ENCODE measurements at regions of chr13 and their contacts with region 1.

Region 1: DNA sequence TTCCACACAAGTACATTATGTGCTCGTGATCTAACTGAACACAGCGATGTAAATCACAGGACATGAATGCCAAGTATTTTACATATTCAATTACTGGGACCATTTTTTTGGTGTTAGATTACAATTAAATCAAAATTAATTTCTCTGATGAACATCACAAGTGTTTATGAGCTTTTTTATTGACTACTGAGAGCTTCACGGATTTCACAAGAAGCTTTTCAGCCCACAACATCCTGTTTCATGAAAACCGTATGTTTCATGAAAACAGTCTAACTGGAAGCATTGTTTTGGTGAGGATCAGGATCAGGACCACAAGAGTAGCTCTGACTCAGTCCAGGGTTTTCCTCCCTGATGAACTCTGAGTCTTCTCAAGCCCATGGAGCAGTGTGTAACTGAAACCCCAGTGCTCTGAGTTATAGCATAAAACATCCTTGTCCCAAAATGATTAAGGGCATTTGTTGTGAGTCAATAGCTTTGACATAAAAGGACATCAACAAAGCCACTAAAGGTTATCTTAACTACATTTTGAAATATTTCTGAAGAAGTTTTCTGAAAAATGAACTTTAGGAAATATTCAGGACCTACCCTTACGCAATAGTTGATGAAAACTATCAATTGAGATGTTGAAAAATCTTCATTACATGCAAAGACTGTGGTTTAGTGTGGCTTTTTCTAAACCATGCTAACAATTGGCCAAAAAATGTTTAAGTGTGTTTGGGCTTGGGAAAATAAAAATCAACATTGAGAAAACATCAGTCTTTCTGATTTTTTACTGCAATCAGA is 49.3 kb downstream of the UFM1 start:
- DNase-seq: no peak
- H3K4me3 ChIP-seq: no peak overlapping the region
- H3K4me3 Mint-ChIP-seq: no peak overlapping the region
- H3K27ac Mint-ChIP-seq: no peak overlapping the region
- H3K4me1 ChIP-seq: peaks cover 10% of the 10 kb centered on the region
- H3K4me1 Mint-ChIP-seq: peaks cover 30% of the 10 kb centered on the region
- H3K27me3 ChIP-seq: no peaks in the 10 kb centered on the region
- H3K27me3 Mint-ChIP-seq: no peaks in the 10 kb centered on the region
- CTCF ChIP-seq: no peak

Region 2: GRCh38 chr13:38341149-38341692 is 57.7 kb before region 1 on chr13:
- CTCF ChIA-PET with region 1: no interaction called
- POLR2A ChIA-PET with region 1: no interaction called
- intact Hi-C with region 1: no loop called
- DNase-seq: no peak
- H3K4me3 ChIP-seq: no peak overlapping the region
- H3K4me3 Mint-ChIP-seq: no peak overlapping the region
- H3K27ac Mint-ChIP-seq: no peak overlapping the region
- H3K4me1 ChIP-seq: no peaks in the 10 kb centered on the region
- H3K4me1 Mint-ChIP-seq: peaks cover 6% of the 10 kb centered on the region
- H3K27me3 ChIP-seq: no peaks in the 10 kb centered on the region
- H3K27me3 Mint-ChIP-seq: no peaks in the 10 kb centered on the region
- CTCF ChIP-seq: no peak

Region 3: GRCh38 chr13:38366954-38367645 is 31.8 kb before region 1 on chr13:
- CTCF ChIA-PET with region 1: no interaction called
- POLR2A ChIA-PET with region 1: no interaction called
- intact Hi-C with region 1: loop called (anchors 1 kb)
- DNase-seq: no peak
- H3K4me3 ChIP-seq: no peak overlapping the region
- H3K4me3 Mint-ChIP-seq: no peak overlapping the region
- H3K27ac Mint-ChIP-seq: no peak overlapping the region
- H3K4me1 ChIP-seq: peaks cover 33% of the 10 kb centered on the region
- H3K4me1 Mint-ChIP-seq: peaks cover 7% of the 10 kb centered on the region
- H3K27me3 ChIP-seq: no peaks in the 10 kb centered on the region
- H3K27me3 Mint-ChIP-seq: no peaks in the 10 kb centered on the region
- CTCF ChIP-seq: no peak

Region 4: GRCh38 chr13:38381890-38382289 is 17.0 kb before region 1 on chr13:
- CTCF ChIA-PET with region 1: no interaction called
- POLR2A ChIA-PET with region 1: no interaction called
- intact Hi-C with region 1: loop called (anchors 1 kb)
- DNase-seq: no peak
- H3K4me3 ChIP-seq: no peak overlapping the region
- H3K4me3 Mint-ChIP-seq: no peak overlapping the region
- H3K27ac Mint-ChIP-seq: no peak overlapping the region
- H3K4me1 ChIP-seq: peaks cover 33% of the 10 kb centered on the region
- H3K4me1 Mint-ChIP-seq: no peaks in the 10 kb centered on the region
- H3K27me3 ChIP-seq: no peaks in the 10 kb centered on the region
- H3K27me3 Mint-ChIP-seq: no peaks in the 10 kb centered on the region
- CTCF ChIP-seq: no peak

Region 5: DNA sequence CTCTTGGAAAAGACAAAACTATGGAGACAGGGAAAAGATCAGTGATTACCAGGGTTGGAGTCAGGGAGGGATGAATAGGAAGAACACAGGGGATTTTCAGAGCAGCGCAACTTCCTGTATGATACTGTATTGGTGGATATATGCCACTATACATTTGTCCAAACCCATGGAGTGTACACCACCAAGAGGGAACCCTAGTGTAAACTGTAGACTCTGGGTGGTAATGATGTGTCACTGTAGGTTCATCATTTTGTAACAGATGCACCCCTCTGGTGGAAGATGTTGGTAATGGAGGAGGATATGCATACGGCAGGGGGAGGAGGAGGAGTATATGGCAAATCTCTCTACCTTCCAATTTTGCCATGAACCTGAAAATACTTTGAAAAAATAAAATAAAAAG is 18.8 kb after region 1 on chr13:
- CTCF ChIA-PET with region 1: no interaction called
- POLR2A ChIA-PET with region 1: no interaction called
- intact Hi-C with region 1: loop called (anchors 1 kb)
- DNase-seq: peak; percentile 55 to 68
- H3K4me3 ChIP-seq: no peak overlapping the region
- H3K4me3 Mint-ChIP-seq: no peak overlapping the region
- H3K27ac Mint-ChIP-seq: no peak overlapping the region
- H3K4me1 ChIP-seq: no peaks in the 10 kb centered on the region
- H3K4me1 Mint-ChIP-seq: no peaks in the 10 kb centered on the region
- H3K27me3 ChIP-seq: no peaks in the 10 kb centered on the region
- H3K27me3 Mint-ChIP-seq: no peaks in the 10 kb centered on the region
- CTCF ChIP-seq: peak; percentile 60 to 69

Region 6: DNA sequence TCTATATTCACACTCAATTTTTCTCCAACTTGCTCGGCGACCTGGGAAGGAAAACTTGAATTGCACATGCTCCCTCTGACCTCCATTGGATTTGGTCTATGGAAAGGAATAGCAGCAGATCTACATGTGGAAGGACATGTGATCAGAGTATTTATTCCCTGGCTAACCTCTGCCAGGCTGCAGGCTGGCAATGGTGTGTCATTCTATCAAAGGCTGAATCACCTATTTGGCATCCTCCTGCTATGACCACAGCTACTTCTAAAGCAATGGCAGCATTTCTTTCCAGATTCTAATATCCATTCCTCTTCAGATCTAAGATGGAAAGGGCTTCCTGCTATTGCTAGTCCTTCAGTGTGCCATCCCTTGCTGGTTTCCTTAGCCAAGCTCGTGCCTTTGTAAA is 143.7 kb after region 1 on chr13:
- CTCF ChIA-PET with region 1: no interaction called
- POLR2A ChIA-PET with region 1: no interaction called
- intact Hi-C with region 1: no loop called
- DNase-seq: no peak
- H3K4me3 ChIP-seq: no peak overlapping the region
- H3K4me3 Mint-ChIP-seq: no peak overlapping the region
- H3K27ac Mint-ChIP-seq: no peak overlapping the region
- H3K4me1 ChIP-seq: no peaks in the 10 kb centered on the region
- H3K4me1 Mint-ChIP-seq: no peaks in the 10 kb centered on the region
- H3K27me3 ChIP-seq: no peaks in the 10 kb centered on the region; the same call in 1 of the 2 replicates
- H3K27me3 Mint-ChIP-seq: peaks cover 8% of the 10 kb centered on the region
- CTCF ChIP-seq: no peak

Region 7: GRCh38 chr13:38582133-38582532 is 183.2 kb after region 1 on chr13:
- CTCF ChIA-PET with region 1: interaction called, 3 read pairs
- POLR2A ChIA-PET with region 1: no interaction called
- intact Hi-C with region 1: loop called (anchors 1 kb)
- DNase-seq: peak in 1 of 2 experiments; percentile 60
- H3K4me3 ChIP-seq: no peak overlapping the region
- H3K4me3 Mint-ChIP-seq: no peak overlapping the region
- H3K27ac Mint-ChIP-seq: no peak overlapping the region
- H3K4me1 ChIP-seq: no peaks in the 10 kb centered on the region
- H3K4me1 Mint-ChIP-seq: no peaks in the 10 kb centered on the region
- H3K27me3 ChIP-seq: no peaks in the 10 kb centered on the region
- H3K27me3 Mint-ChIP-seq: no peaks in the 10 kb centered on the region
- CTCF ChIP-seq: peak; percentile 58 to 71

Region 8: DNA sequence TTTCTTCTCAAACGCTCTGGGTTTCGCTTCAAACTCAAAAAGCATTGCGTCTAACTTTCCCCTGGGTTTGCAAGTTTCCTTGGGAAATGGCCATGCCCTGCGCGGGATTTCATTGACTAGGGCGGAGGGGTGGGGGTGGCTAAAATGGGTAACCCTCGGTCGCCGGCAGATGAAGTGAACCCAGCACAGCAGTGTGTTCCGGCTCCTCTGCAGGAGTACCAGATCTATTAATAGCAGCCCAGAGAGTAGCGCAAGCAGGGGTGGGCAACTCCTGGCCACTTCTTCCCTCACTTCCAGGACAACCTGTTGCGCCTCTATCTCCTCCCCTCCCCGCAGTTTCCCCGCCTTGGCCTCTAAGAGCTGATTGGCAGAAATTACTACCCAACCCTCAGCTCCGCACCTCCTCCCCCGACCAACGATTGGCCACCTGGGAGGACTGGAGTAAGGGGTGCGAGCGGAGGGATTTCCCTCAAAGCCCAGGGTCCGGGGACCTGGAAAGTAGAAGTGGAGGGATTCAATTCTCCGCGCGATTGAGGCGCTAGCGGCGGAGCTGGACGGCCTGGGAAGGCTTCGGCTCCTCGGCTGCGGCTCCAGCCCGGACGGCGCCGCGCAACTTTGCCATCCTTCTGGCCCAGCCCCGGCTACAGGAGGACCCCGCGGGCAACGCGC is 287.8 kb after region 1 on chr13 and contains the start of gene FREM2:
- CTCF ChIA-PET with region 1: no interaction called
- POLR2A ChIA-PET with region 1: no interaction called
- intact Hi-C with region 1: loop called (anchors 5 kb)
- DNase-seq: peak; percentile 93 to 94
- H3K4me3 ChIP-seq: peak within 1 kb of the TSS; percentile 82
- H3K4me3 Mint-ChIP-seq: peak within 1 kb of the TSS; percentile 92
- H3K27ac Mint-ChIP-seq: peak within 1 kb of the TSS; percentile 50
- H3K4me1 ChIP-seq: peaks cover 25% of the 10 kb centered on the region
- H3K4me1 Mint-ChIP-seq: peaks cover 6% of the 10 kb centered on the region
- H3K27me3 ChIP-seq: no peaks in the 10 kb centered on the region
- H3K27me3 Mint-ChIP-seq: no peaks in the 10 kb centered on the region
- CTCF ChIP-seq: no peak
- total RNA-seq, gene FREM2: 35.5 and 42.6 TPM in 2 replicates

Measured in Caco-2 (cell line).